ENCODE measurements at regions of chr2 and their contacts with region 1.

Region 1: DNA sequence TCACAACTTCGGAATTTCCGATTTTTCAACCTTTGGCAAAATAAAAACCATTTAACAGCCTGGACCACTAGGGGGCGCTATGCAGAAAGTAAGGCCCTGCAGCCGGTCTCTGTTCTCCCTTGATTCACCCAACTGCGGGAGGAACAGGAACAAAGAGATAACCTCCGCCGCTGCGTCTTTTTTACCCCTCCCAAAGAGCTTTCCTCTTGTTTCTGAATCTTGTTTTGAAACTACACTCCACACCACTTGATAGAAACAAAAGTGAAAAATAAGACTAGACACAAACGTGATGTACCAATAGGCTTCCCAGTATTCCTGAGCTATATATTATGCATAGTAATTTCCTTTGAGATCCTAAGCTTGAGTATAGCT is 231.2 kb downstream of the MYO3B start:
- DNase-seq: no peak
- ATAC-seq: peak; percentile 81
- H3K4me3 ChIP-seq: no peak overlapping the region
- H3K27ac ChIP-seq: no peak overlapping the region
- H3K4me1 ChIP-seq: peaks cover 11% of the 10 kb centered on the region
- H3K27me3 ChIP-seq: no peaks in the 10 kb centered on the region
- CTCF ChIP-seq: peak; percentile 73 to 85 (median 79)
- EP300 ChIP-seq: no peak
- POLR2A ChIP-seq: no peak
- RAD21 ChIP-seq: peak; percentile 68

Region 2: DNA sequence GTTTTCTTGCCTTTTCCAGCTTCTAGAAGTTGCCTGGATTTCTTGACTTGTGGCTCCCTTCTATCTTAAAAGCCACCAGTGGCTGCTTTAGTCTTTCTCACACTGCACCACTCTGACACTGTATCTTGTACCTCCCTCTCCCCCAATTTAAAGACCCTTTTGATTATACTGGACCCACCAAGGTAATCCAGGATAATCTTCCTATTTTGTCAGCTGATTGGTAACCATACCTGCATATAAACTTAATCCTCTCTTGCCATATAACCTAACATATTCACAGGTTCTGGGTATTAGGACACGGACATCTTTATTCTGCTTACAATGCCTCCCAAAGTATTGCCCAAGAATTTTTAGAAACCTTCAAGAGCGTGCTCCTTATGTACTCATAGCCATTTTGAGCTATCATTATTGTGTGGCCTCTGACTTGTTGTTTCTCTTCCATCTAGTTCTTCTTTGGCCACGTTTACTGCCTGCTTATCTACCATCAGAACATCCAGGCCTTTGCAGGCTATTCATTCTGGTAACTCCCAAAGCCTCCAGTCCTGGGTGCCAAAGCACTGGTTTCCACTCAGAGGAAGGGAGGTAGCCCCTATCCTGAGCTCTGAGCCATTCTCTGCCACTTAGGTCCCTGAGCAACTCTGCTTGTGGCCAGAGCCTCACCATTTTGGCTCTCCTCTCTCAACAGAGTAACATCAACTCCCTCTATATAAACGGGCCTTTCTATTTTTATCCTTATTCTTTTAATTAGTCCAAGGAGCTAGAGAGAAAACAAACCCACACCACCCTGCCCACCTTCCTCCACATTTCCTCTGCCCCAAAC is 160.4 kb before region 1 on chr2:
- CTCF ChIA-PET with region 1: no interaction called
- POLR2A ChIA-PET with region 1: no interaction called
- RAD21 ChIA-PET with region 1: no interaction called
- SMC1A ChIA-PET with region 1: no interaction called
- in situ Hi-C with region 1: no loop called
- intact Hi-C with region 1: no loop called
- DNase-seq: no peak
- ATAC-seq: no peak
- H3K4me3 ChIP-seq: no peak overlapping the region
- H3K27ac ChIP-seq: no peak overlapping the region
- H3K4me1 ChIP-seq: no peaks in the 10 kb centered on the region
- H3K27me3 ChIP-seq: no peaks in the 10 kb centered on the region
- CTCF ChIP-seq: no peak
- EP300 ChIP-seq: no peak
- POLR2A ChIP-seq: no peak
- RAD21 ChIP-seq: no peak

Region 3: DNA sequence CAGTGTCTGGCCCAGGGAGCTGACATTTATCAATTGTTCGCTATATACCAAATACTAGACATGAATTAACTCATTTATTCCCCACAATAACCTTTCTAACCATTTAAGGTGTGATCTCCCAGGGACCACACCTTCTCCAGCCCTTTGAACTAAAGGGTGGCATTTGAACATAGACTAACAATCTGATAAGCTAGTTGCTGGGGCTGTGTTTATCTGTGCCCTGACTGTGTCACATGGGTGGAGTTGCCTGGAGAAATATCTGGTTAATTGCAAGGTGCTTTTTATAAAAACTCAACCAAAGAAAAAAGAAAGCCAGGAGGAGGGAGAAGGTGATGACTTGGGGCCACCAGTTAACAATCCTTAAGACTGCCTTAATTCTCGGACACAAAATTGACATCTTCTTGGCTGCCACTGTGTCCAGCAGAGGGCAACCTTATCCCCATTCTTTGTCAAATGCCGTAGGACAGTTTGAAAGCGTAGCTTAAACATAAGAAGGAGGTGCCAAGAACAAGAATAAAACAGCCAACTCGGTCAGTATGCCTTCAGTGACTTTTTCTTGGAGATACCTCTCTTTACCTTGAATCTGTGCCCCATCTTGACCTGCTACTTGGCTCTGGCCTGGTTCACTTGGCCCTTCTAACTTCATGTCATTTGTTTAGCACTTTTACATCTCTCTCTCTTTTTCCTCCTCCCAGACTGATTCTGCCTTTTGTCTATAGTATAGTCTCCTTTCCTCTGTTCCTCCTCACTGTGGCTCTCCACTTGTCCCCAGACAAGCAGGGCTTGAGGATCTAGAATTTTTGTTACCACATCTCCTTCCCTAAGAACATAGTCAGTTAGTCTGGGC is 47.8 kb before region 1 on chr2:
- CTCF ChIA-PET with region 1: interaction called, 16 read pairs
- POLR2A ChIA-PET with region 1: no interaction called
- RAD21 ChIA-PET with region 1: interaction called, 13 read pairs
- SMC1A ChIA-PET with region 1: interaction called, 6 read pairs
- in situ Hi-C with region 1: no loop called
- intact Hi-C with region 1: no loop called
- DNase-seq: peak; percentile 26
- ATAC-seq: peak; percentile 97
- H3K4me3 ChIP-seq: no peak overlapping the region
- H3K27ac ChIP-seq: no peak overlapping the region
- H3K4me1 ChIP-seq: no peaks in the 10 kb centered on the region
- H3K27me3 ChIP-seq: no peaks in the 10 kb centered on the region
- CTCF ChIP-seq: peak; percentile 76 to 87 (median 80)
- EP300 ChIP-seq: no peak
- POLR2A ChIP-seq: no peak
- RAD21 ChIP-seq: peak; percentile 65

Region 4: GRCh38 chr2:170391018-170391417 is 18.1 kb before region 1 on chr2:
- CTCF ChIA-PET with region 1: interaction called, 21 read pairs
- POLR2A ChIA-PET with region 1: no interaction called
- RAD21 ChIA-PET with region 1: interaction called, 4 read pairs
- SMC1A ChIA-PET with region 1: interaction called, 3 read pairs
- in situ Hi-C with region 1: no loop called
- intact Hi-C with region 1: no loop called
- DNase-seq: no peak
- ATAC-seq: no peak
- H3K4me3 ChIP-seq: no peak overlapping the region
- H3K27ac ChIP-seq: no peak overlapping the region
- H3K4me1 ChIP-seq: no peaks in the 10 kb centered on the region
- H3K27me3 ChIP-seq: no peaks in the 10 kb centered on the region
- CTCF ChIP-seq: no peak
- EP300 ChIP-seq: no peak
- POLR2A ChIP-seq: no peak
- RAD21 ChIP-seq: no peak

Region 5: DNA sequence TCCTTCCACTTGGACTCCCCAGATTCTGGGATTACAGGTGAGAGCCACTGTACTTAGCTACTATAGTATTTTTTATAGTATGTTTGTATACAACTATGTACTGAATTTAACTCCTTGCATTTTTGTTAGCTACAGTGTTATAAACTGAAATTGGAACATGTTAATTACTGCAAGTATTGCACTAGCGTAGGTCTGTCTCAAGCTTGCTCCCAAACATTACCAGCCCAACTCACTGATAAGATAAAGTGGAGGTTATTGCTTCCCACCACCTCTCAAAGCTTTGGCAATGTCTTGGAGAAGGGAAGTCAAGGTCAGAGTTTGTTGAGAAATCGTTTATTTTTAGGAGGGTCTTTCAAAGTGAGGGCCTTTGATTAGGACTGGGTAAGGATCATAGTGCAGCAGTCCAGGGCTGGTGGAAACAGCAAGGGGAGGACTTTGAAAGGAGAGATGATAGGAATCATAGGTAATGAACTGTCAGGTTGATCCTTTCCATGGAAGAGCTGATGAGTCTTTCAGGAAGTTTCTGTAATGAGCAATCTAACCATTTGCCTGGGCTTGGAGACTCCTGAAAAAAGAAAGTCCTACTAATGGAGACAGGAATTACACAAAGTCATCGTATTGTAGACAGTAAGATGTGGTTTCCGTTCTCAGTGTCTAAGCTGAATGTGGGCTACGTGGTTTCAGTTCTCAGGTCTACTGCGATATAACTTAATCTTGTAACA is 25.9 kb after region 1 on chr2:
- CTCF ChIA-PET with region 1: interaction called, 16 read pairs
- POLR2A ChIA-PET with region 1: no interaction called
- RAD21 ChIA-PET with region 1: interaction called, 8 read pairs
- SMC1A ChIA-PET with region 1: interaction called, 19 read pairs
- in situ Hi-C with region 1: no loop called
- intact Hi-C with region 1: no loop called
- DNase-seq: peak; percentile 51
- ATAC-seq: peak; percentile 94
- H3K4me3 ChIP-seq: no peak overlapping the region
- H3K27ac ChIP-seq: no peak overlapping the region
- H3K4me1 ChIP-seq: peaks cover 6% of the 10 kb centered on the region; the same call in 1 of the 2 replicates
- H3K27me3 ChIP-seq: no peaks in the 10 kb centered on the region
- CTCF ChIP-seq: no peak
- EP300 ChIP-seq: no peak
- POLR2A ChIP-seq: no peak
- RAD21 ChIP-seq: no peak

Region 6: GRCh38 chr2:170505631-170506275 is 96.6 kb after region 1 on chr2:
- CTCF ChIA-PET with region 1: interaction called, 8 read pairs
- POLR2A ChIA-PET with region 1: no interaction called
- RAD21 ChIA-PET with region 1: no interaction called
- SMC1A ChIA-PET with region 1: interaction called, 7 read pairs
- in situ Hi-C with region 1: no loop called
- intact Hi-C with region 1: loop called (anchors 5 kb)
- DNase-seq: no peak
- ATAC-seq: no peak
- H3K4me3 ChIP-seq: no peak overlapping the region
- H3K27ac ChIP-seq: no peak overlapping the region
- H3K4me1 ChIP-seq: peaks cover 15% of the 10 kb centered on the region
- H3K27me3 ChIP-seq: no peaks in the 10 kb centered on the region
- CTCF ChIP-seq: no peak
- EP300 ChIP-seq: no peak
- POLR2A ChIP-seq: no peak
- RAD21 ChIP-seq: no peak

Region 7: DNA sequence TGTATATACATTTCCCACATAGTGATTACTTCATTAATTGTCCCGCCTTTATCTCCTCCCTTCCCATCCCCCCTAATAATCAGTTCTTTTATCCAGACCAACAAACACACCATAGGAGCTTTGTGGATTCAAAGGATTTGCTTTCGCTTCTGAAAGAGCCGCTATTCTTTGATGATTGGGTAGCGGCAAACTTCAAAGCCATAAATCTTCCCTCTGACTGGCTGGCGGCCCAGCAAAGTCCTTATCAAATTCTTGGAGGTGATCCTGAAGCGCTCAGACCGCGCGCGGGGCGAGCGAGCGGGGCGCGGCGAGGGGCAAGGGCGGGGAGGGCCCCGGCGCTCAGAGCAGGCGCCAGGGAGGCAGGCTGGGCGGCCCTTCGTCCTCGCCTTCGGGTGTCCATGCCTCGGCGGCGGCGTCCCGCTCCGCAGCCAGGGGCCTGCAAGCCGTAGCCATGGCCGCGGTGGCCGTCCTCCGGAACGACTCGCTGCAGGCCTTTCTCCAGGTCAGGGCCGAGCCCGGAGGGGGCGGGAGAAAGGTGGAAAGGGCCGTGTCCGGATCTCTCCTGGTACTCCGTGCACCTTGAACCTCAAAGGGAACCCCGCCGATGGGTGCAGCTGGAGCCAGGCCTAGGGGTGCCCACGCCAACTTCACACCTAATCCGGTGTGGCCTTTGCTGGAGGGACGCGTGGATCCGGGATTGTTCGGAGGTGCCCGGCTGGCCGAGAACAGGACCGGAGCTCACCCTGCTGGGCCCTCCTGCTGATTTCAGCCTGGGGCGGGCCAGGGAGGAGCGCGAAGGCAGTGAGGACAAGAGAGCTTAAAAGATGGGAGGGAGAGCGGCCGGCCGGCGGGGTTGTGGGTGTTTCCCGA is 306.1 kb after region 1 on chr2 and contains the start of gene SP5:
- CTCF ChIA-PET with region 1: interaction called, 6 read pairs
- POLR2A ChIA-PET with region 1: no interaction called
- RAD21 ChIA-PET with region 1: no interaction called
- SMC1A ChIA-PET with region 1: interaction called, 4 read pairs
- in situ Hi-C with region 1: no loop called
- intact Hi-C with region 1: loop called (anchors 5 kb)
- DNase-seq: no peak
- ATAC-seq: peak; percentile 53
- H3K4me3 ChIP-seq: peak within 1 kb of the TSS; percentile 55; the same call in 1 of the 2 replicates
- H3K27ac ChIP-seq: no peak within 1 kb of the TSS
- H3K4me1 ChIP-seq: no peaks in the 10 kb centered on the region; the same call in 1 of the 2 replicates
- H3K27me3 ChIP-seq: peaks cover 29 to 39% of the 10 kb centered on the region in 2 experiments
- CTCF ChIP-seq: no peak
- EP300 ChIP-seq: no peak
- POLR2A ChIP-seq: no peak
- RAD21 ChIP-seq: no peak
- polyA plus RNA-seq, gene SP5: not detected